Gastrocnemius medialis (tissue), 4 donors: ENCODE measurements at regions of chr10 and their contacts with region 1.

Region 1: GRCh38 chr10:70815504-70816219 is at the start of gene SGPL1:
- DNase-seq: peak; percentile 54 to 75
- ATAC-seq: peak; percentile 84 to 85
- H3K4me3 ChIP-seq: peak within 1 kb of the TSS; percentile 65 to 96 (median 80)
- H3K27ac ChIP-seq: peak within 1 kb of the TSS; percentile 89 to 97 (median 94)
- H3K4me1 ChIP-seq: peaks cover 7 to 14% of the 10 kb centered on the region in 2 donors
- H3K27me3 ChIP-seq: no peaks in the 10 kb centered on the region
- CTCF ChIP-seq: peak; percentile 90 to 100 (median 99)
- POLR2A ChIP-seq: peak; percentile 65 to 68
- total RNA-seq, gene SGPL1: 6.5 to 17.1 (median 11.3) TPM

Region 2: DNA sequence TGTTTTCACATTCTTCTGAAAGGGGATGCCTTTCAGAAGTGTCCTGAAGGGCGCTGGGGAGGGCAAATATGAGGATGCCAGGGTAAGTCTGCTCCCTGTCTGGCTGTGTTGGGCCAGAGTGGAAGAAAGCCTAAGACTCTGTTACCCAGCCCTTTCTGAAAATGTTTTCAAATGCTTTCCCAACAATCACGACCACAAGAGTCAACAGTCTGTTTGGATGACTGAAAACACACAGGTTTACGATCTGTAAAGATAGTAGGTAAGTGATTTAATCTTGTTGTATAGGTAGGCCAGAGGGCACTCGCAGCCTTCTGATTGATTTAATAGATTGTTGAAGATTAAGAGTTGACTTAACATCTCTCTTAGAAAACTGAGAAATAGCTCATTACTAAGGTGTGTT is 13.3 kb after region 1 on chr10:
- in situ Hi-C with region 1: no loop called
- intact Hi-C with region 1: loop called (anchors 1 kb)
- DNase-seq: no peak
- ATAC-seq: no peak
- H3K4me3 ChIP-seq: no peak overlapping the region
- H3K27ac ChIP-seq: peak overlapping the region; percentile 58 to 74 (median 68)
- H3K4me1 ChIP-seq: peaks cover 17 to 20% of the 10 kb centered on the region in 2 donors
- H3K27me3 ChIP-seq: no peaks in the 10 kb centered on the region
- CTCF ChIP-seq: no peak
- POLR2A ChIP-seq: no peak

Region 3: GRCh38 chr10:70880077-70880534 is 64.4 kb after region 1 on chr10:
- in situ Hi-C with region 1: loop called (anchors 5 kb)
- intact Hi-C with region 1: loop called (anchors 1 kb)
- DNase-seq: peak; percentile 54 to 73
- ATAC-seq: peak; percentile 91 to 92
- H3K4me3 ChIP-seq: no peak overlapping the region
- H3K27ac ChIP-seq: no peak overlapping the region
- H3K4me1 ChIP-seq: no peaks in the 10 kb centered on the region
- H3K27me3 ChIP-seq: no peaks in the 10 kb centered on the region
- CTCF ChIP-seq: peak; percentile 88 to 94 (median 91)
- POLR2A ChIP-seq: no peak